CD4-positive, alpha-beta T cell (primary cell): ENCODE measurements at regions of chr19 and their contacts with region 1.

Region 1: GRCh38 chr19:54115109-54116063 is at the starts of genes PRPF31 and TFPT:
- DNase-seq: peak; percentile 90 to 98 (median 95)
- ATAC-seq: peak; percentile 86
- H3K4me3 ChIP-seq: peak within 1 kb of the TSS; percentile 83
- H3K4me3 Mint-ChIP-seq: peak within 1 kb of the TSS; percentile 87
- H3K27ac ChIP-seq: peak within 1 kb of the TSS; percentile 65 to 87
- H3K27ac Mint-ChIP-seq: peak within 1 kb of the TSS; percentile 81
- H3K4me1 ChIP-seq: peaks cover 33% of the 10 kb centered on the region
- H3K4me1 Mint-ChIP-seq: peaks cover 27% of the 10 kb centered on the region
- H3K27me3 ChIP-seq: no peaks in the 10 kb centered on the region
- H3K27me3 Mint-ChIP-seq: no peaks in the 10 kb centered on the region
- CTCF ChIP-seq: no peak
- total RNA-seq, gene PRPF31: 52.9 to 55.9 TPM
- total RNA-seq, gene TFPT: 10.1 to 11.2 TPM

Region 2: DNA sequence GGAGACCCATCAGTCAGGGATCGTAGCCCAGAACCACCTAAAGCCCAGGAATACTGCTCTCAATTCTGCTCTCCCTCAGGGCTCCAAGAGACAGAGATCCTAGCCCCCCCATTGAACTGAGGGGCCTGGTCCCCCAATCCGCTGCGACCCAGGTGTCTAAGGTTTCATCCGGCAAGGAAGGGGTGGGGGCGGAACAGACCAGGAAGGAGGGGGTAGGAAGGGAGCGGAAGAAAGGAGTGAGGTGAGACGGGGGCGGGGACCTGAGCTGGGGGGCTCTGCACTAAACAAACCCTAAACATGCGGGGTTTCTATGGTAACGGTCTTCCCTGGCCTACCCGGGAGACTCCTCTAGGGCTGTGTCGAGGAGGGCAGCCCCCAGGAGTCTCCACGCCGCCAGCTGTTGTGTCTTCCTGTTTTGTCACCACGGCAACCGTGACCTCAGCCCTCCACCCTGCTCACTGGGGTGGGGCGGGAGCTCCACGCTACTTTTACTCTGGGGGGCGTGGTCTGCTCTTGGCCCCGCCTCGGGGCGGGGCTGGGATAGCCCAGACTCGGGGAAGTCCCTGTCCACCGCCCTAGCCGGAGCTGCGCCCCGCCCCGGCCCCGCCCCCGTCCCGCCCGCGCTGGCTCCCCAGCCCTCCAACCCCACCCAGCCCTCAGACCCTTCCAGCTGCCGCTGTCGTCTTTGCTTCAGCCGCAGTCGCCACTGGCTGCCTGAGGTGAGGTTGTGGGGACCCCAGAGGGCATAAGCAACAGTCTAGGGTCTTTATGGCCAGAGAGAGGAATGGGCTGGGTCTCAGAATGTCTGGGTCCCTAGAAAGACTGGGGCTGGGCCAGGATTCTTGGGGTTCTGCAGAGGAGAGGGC is 247.9 kb before region 1 on chr19 and contains the start of gene MYADM:
- CTCF ChIA-PET with region 1: no interaction called
- POLR2A ChIA-PET with region 1: interaction called, 3 read pairs
- intact Hi-C with region 1: loop called in 1 of 2 experiments (anchors 5 kb)
- DNase-seq: peak; percentile 99 to 100 (median 100)
- ATAC-seq: peak; percentile 75
- H3K4me3 ChIP-seq: peak within 1 kb of the TSS; percentile 100
- H3K4me3 Mint-ChIP-seq: peak within 1 kb of the TSS; percentile 99
- H3K27ac ChIP-seq: peak within 1 kb of the TSS; percentile 97 to 100
- H3K27ac Mint-ChIP-seq: peak within 1 kb of the TSS; percentile 99
- H3K4me1 ChIP-seq: peaks cover 59% of the 10 kb centered on the region
- H3K4me1 Mint-ChIP-seq: peaks cover 46% of the 10 kb centered on the region
- H3K27me3 ChIP-seq: no peaks in the 10 kb centered on the region
- H3K27me3 Mint-ChIP-seq: no peaks in the 10 kb centered on the region
- CTCF ChIP-seq: no peak
- total RNA-seq, gene MYADM: 444 to 448 TPM

Region 3: GRCh38 chr19:53942001-53942786 is 173.2 kb before region 1 on chr19:
- CTCF ChIA-PET with region 1: no interaction called
- POLR2A ChIA-PET with region 1: no interaction called
- intact Hi-C with region 1: no loop called
- DNase-seq: peak in 2 of 14 experiments; percentile 10 to 34
- ATAC-seq: no peak
- H3K4me3 ChIP-seq: no peak overlapping the region
- H3K4me3 Mint-ChIP-seq: no peak overlapping the region
- H3K27ac ChIP-seq: no peak overlapping the region
- H3K27ac Mint-ChIP-seq: no peak overlapping the region
- H3K4me1 ChIP-seq: no peaks in the 10 kb centered on the region
- H3K4me1 Mint-ChIP-seq: no peaks in the 10 kb centered on the region
- H3K27me3 ChIP-seq: peaks cover 32 to 43% of the 10 kb centered on the region in 2 experiments
- H3K27me3 Mint-ChIP-seq: peaks cover 82% of the 10 kb centered on the region
- CTCF ChIP-seq: no peak

Region 4: DNA sequence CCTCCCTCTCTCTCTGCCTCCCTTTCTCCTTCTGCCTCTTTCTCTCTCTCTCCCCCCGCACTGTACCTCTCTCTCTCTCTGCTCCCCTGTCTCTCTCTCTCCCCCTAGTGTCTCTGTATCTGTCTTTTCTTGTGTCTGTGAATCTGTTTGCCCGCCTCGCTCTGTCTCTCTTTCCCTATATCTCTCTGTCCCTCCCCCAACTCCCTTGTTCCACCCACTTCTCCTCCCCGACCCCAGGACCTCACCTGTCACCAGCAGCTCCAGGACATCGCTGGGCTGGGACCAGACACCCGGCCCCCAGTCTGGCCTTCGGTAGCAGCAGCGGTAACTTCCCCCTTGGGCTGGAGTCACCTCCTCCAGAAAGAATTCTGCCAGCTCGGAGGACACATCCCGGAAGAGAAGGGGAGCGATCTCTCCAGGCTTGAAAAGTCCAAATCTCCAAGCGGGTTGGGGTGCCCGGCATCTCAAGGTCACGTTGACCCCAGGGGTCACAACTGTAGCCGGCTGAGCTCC is 18.7 kb before region 1 on chr19:
- CTCF ChIA-PET with region 1: interaction called, 3 read pairs
- POLR2A ChIA-PET with region 1: interaction called, 24 read pairs
- intact Hi-C with region 1: no loop called
- DNase-seq: peak in 4 of 14 experiments; percentile 26 to 57 (median 48)
- ATAC-seq: peak; percentile 48
- H3K4me3 ChIP-seq: peak overlapping the region; percentile 14
- H3K4me3 Mint-ChIP-seq: peak overlapping the region; percentile 73
- H3K27ac ChIP-seq: peak overlapping the region in 1 of 2 donors; percentile 5
- H3K27ac Mint-ChIP-seq: peak overlapping the region; percentile 55
- H3K4me1 ChIP-seq: peaks cover 22% of the 10 kb centered on the region
- H3K4me1 Mint-ChIP-seq: peaks cover 18% of the 10 kb centered on the region
- H3K27me3 ChIP-seq: peaks cover 11 to 16% of the 10 kb centered on the region in 2 experiments
- H3K27me3 Mint-ChIP-seq: peaks cover 30% of the 10 kb centered on the region
- CTCF ChIP-seq: no peak

Region 5: DNA sequence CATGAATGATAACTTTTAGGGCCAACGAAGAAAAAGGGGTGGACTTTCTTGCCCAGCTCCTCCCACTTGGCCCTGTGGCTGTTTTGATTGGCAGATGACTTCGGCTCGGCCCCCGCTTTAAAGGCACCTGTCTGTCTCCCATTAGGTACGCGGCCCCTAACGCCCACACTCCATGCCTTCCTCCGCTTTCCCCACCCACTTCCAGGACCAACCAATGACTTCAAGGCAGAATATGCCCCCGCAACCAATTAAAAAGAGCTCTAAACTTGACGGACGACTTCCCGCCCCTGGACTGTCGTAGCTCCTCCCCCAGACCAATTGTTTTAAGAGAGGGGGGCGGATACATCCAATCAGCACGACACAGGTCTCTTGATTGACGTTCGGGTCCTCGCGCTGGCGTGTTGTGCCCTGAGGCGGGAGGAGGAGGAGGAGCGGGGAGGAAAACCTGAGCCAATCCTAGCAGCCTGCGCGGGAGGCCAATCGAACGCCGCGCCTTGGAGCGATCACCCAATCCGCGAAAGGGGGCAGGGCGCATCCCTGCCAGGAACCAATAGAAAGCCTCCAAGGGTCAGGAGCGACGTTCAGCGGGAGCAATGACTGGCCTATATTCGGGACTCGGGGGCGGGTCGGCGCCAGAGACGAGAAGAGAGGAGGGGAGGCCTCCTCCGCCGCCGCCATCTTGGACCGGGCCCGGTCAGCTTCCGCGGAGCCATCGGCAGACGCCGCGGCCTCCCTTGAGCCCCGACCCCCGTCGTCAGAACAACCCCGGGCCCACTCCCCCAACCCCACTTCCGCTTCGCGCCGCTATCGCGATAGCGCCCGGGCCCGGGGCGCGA is 21.9 kb after region 1 on chr19 and contains the start of gene CNOT3:
- CTCF ChIA-PET with region 1: interaction called, 5 read pairs
- POLR2A ChIA-PET with region 1: interaction called, 151 read pairs
- intact Hi-C with region 1: loop called (anchors 1 kb)
- DNase-seq: peak; percentile 97 to 100 (median 98)
- ATAC-seq: peak; percentile 78
- H3K4me3 ChIP-seq: peak within 1 kb of the TSS; percentile 69
- H3K4me3 Mint-ChIP-seq: peak within 1 kb of the TSS; percentile 92
- H3K27ac ChIP-seq: peak within 1 kb of the TSS; percentile 82 to 92
- H3K27ac Mint-ChIP-seq: peak within 1 kb of the TSS; percentile 79
- H3K4me1 ChIP-seq: peaks cover 48% of the 10 kb centered on the region
- H3K4me1 Mint-ChIP-seq: peaks cover 48% of the 10 kb centered on the region
- H3K27me3 ChIP-seq: no peaks in the 10 kb centered on the region
- H3K27me3 Mint-ChIP-seq: no peaks in the 10 kb centered on the region
- CTCF ChIP-seq: no peak
- total RNA-seq, gene CNOT3: 26.7 to 28.7 TPM

Region 6: GRCh38 chr19:54203151-54203611 is 87.8 kb after region 1 on chr19:
- CTCF ChIA-PET with region 1: no interaction called
- POLR2A ChIA-PET with region 1: interaction called, 10 read pairs
- intact Hi-C with region 1: loop called in 1 of 2 experiments (anchors 5 kb)
- DNase-seq: no peak
- ATAC-seq: no peak
- H3K4me3 ChIP-seq: no peak overlapping the region
- H3K4me3 Mint-ChIP-seq: peak overlapping the region; percentile 73
- H3K27ac ChIP-seq: no peak overlapping the region
- H3K27ac Mint-ChIP-seq: peak overlapping the region; percentile 93
- H3K4me1 ChIP-seq: peaks cover 83% of the 10 kb centered on the region
- H3K4me1 Mint-ChIP-seq: peaks cover 68% of the 10 kb centered on the region
- H3K27me3 ChIP-seq: no peaks in the 10 kb centered on the region
- H3K27me3 Mint-ChIP-seq: no peaks in the 10 kb centered on the region
- CTCF ChIP-seq: no peak